CD4-positive, alpha-beta memory T cell (primary cell): ENCODE measurements at regions of chr9 and their contacts with region 1.

Region 1: DNA sequence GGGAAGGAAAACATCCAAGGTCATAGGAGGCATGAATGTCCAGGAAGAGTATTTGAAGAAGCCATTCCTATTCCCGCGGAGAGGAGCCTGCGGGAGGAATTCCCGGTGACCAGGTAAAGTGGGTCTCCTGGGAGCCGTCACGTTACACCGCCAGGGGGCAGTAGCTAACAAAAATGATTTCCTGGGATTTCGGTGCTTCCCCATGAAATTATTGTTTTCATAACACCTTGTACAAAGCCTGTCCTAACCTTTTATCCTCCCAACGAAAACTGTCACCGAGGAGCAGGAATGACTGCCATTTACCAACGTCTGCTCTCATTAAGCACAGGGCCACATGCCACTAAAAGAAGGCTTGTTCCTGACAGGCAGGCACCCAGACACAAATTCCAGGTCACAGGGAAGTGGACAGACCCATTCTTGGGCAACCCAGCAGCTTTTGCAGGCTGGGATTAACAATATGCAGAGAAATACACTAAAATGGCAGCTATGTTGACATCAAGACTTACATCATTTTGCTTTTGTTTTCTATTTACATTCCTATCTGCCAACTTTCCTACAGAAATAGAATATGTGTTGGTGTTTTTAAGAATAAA is 41.2 kb upstream of the CTSL start:
- DNase-seq: no peak
- H3K4me3 ChIP-seq: no peak overlapping the region
- H3K4me3 Mint-ChIP-seq: no peak overlapping the region
- H3K27ac ChIP-seq: no peak overlapping the region
- H3K27ac Mint-ChIP-seq: peak overlapping the region in 1 of 7 donors; percentile 89
- H3K4me1 ChIP-seq: peaks cover 21% of the 10 kb centered on the region
- H3K4me1 Mint-ChIP-seq: peaks cover 12 to 36% (median 19%) of the 10 kb centered on the region in 4 donors
- H3K27me3 ChIP-seq: no peaks in the 10 kb centered on the region
- H3K27me3 Mint-ChIP-seq: no peaks in the 10 kb centered on the region

Region 2: DNA sequence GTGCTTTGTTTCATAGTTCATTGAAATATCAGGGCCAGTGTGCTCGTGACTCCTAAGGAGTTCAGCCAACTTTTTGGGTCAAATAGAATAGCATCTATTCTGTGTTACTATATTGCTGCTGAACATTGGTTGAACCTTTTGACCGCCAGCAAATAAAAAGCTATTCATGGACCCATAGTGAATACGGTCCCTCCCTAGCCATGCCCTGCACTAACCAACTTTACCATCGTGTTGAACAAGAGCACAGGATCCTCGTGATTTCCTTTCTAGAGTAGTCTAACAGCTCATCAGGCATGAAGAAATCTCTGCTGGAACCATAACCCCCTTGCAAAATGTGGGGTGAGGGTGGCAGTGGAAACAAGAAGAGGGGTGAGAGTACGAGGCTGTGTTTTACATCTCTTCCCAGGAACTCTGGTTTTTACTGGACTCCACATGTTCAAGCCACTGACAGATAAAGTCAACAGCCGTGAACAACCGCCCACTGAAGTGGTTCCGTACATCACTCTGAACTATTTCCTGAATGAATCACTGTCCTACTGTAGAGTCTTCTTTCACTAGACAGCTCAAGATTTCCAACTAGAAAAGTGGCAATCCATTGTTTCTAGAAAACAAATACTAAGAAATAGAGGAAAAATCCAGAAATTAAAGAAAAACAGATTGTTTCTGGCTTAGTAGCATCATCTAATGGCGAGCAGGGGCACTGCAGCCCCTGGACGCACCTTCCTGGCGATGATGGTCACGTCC is 127.8 kb after region 1 on chr9:
- CTCF ChIA-PET with region 1: interaction called, 4 read pairs
- POLR2A ChIA-PET with region 1: no interaction called
- intact Hi-C with region 1: loop called (anchors 1 kb)
- DNase-seq: peak in 1 of 5 donors; percentile 5
- H3K4me3 ChIP-seq: no peak overlapping the region
- H3K4me3 Mint-ChIP-seq: peak overlapping the region in 6 of 8 donors; percentile 11 to 51 (median 36)
- H3K27ac ChIP-seq: no peak overlapping the region
- H3K27ac Mint-ChIP-seq: no peak overlapping the region
- H3K4me1 ChIP-seq: peaks cover 10% of the 10 kb centered on the region
- H3K4me1 Mint-ChIP-seq: peaks cover 0 to 15% (median under 1%) of the 10 kb centered on the region in 4 donors
- H3K27me3 ChIP-seq: no peaks in the 10 kb centered on the region
- H3K27me3 Mint-ChIP-seq: peaks cover 0 to 6% of the 10 kb centered on the region in 2 donors

Region 3: GRCh38 chr9:87973730-87974292 is 289.1 kb after region 1 on chr9:
- CTCF ChIA-PET with region 1: no interaction called
- POLR2A ChIA-PET with region 1: no interaction called
- intact Hi-C with region 1: loop called (anchors 10 kb)
- DNase-seq: peak in 1 of 5 donors; percentile 24
- H3K4me3 ChIP-seq: peak overlapping the region; percentile 14 to 96
- H3K4me3 Mint-ChIP-seq: peak overlapping the region; percentile 92 to 99 (median 96)
- H3K27ac ChIP-seq: peak overlapping the region; percentile 87
- H3K27ac Mint-ChIP-seq: peak overlapping the region; percentile 95 to 100 (median 99)
- H3K4me1 ChIP-seq: peaks cover 17% of the 10 kb centered on the region
- H3K4me1 Mint-ChIP-seq: peaks cover 16 to 35% (median 29%) of the 10 kb centered on the region in 4 donors
- H3K27me3 ChIP-seq: no peaks in the 10 kb centered on the region
- H3K27me3 Mint-ChIP-seq: peaks cover 0 to 2% of the 10 kb centered on the region in 2 donors